ENCODE measurements at regions of chr13 and their contacts with region 1.

Region 1: GRCh38 chr13:24693862-24694471 is 13.8 kb downstream of the ATP12A start:
- DNase-seq: peak; percentile 79
- CTCF ChIP-seq: peak; percentile 56

Region 2: GRCh38 chr13:24630851-24631620 is 62.9 kb before region 1 on chr13:
- CTCF ChIA-PET with region 1: no interaction called
- POLR2A ChIA-PET with region 1: no interaction called
- DNase-seq: no peak
- CTCF ChIP-seq: no peak

Region 3: DNA sequence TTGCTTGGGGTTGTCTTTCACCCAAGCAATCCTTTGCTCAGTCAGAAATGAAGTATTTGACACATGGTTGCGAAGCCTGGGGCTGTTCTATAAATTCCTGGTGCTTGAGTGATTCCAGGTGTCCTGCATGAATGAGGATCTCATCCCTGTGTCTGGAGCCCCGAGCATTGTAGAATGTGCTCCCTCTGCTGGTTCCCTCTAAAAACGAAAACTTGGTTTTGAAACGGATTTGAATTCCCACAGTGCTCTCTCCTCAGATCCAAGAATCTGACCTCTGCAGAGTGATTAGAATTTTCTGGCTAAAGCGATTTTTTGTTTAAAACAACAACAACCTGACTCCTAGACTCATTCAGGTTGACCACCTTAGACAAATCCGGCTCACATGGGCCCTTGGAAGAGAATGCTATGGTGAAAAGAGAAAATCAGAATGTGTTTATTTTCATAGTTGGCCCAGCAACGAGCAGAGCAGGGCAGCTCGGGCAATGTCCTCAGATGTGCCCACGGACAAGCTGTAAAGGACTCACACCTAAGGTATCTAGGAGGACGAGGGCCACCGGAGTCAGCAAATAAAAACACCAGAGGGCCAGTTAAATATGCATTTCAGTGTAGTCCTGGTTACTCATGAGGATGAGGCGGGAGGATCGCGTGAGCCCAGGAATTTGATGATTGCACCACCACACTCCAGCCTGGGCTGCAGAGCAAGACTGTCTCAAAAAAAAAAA is 22.4 kb before region 1 on chr13:
- CTCF ChIA-PET with region 1: interaction called, 12 read pairs
- POLR2A ChIA-PET with region 1: no interaction called
- DNase-seq: peak; percentile 54
- CTCF ChIP-seq: peak; percentile 53

Region 4: DNA sequence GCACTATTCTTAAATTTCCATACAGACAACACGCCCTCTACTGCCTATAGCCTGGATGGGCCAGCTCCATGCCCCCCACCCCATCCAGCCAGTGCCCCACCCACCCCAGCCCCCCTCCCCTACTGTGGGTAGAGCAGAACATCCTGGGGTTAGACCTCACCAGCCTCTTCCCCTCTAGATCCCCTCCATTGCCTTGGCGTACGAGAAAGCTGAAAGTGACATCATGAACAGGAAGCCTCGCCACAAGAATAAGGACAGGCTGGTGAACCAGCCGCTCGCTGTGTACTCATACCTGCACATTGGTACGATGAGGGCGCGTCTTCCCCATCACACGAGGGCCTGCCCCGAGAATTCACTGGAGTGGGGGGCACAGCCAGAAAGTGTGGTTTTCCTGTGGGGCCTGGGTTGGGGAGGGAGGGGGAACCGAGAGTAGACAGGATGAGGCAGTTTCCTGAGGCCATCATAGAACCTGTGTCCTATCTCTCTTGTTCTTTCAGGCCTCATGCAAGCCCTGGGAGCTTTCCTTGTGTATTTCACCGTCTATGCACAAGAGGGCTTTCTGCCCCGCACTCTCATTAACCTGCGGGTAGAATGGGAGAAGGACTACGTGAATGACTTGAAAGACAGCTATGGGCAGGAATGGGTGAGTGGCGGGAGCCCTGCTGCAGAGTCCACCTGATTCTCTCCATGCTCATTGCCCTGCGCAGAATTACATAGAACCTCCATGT is 15.4 kb after region 1 on chr13:
- CTCF ChIA-PET with region 1: interaction called, 40 read pairs
- POLR2A ChIA-PET with region 1: no interaction called
- DNase-seq: peak; percentile 52
- CTCF ChIP-seq: no peak